Naive thymus-derived CD4-positive, alpha-beta T cell (primary cell): ENCODE measurements at regions of chr3 and their contacts with region 1.

Region 1: DNA sequence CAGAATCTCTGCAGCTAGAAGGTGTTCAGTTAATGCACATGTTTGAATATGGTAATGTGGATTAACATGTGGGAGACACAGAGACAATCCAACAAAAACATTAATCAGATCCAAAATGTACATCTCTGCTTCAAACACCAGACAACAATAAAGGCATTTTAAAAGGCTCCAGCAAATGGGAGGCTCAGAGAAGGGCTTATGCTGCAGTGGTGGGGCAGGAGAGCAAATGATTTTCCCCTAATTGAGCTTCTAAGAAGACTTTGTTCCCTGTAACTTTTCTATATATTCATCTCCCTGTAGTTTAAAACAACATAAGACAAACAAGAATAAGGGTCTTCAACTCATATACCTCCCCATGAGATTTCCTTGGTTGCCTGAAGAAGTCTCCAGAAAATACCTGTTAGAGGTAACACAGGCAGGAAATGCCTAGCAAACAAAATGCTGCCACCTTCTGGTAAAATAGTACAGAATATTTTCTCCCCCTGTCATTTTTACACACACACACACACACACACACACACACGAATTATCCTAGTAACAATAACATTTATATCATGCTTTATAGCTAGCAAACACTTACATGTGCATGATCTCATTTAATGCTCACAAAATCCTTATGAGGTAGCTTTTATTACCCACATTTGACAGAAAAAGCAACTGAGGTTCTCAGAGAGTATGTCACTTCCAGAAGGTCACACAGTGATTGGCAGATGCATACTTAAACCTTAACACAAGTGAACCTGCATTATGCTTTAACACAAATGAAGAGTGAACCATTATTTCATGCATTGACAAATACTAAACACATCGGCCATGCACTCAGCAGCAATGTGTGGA is 123.4 kb upstream of the MB21D2 start:
- DNase-seq: peak in 7 of 9 donors; percentile 13 to 50 (median 30)
- ATAC-seq: peak; percentile 26
- H3K4me3 ChIP-seq: no peak overlapping the region
- H3K4me3 Mint-ChIP-seq: no peak overlapping the region
- H3K27ac ChIP-seq: no peak overlapping the region
- H3K27ac Mint-ChIP-seq: no peak overlapping the region
- H3K4me1 ChIP-seq: no peaks in the 10 kb centered on the region
- H3K4me1 Mint-ChIP-seq: peaks cover 0 to 9% (median 0%) of the 10 kb centered on the region in 7 donors
- H3K27me3 ChIP-seq: no peaks in the 10 kb centered on the region
- H3K27me3 Mint-ChIP-seq: peaks cover 0 to 9% (median 0%) of the 10 kb centered on the region in 5 donors

Region 2: GRCh38 chr3:192887047-192887446 is 154.0 kb before region 1 on chr3:
- CTCF ChIA-PET with region 1: no interaction called
- POLR2A ChIA-PET with region 1: no interaction called
- intact Hi-C with region 1: loop called in 1 of 2 experiments (anchors 5 kb)
- DNase-seq: no peak
- ATAC-seq: no peak
- H3K4me3 ChIP-seq: no peak overlapping the region
- H3K4me3 Mint-ChIP-seq: peak overlapping the region in 1 of 10 donors; percentile 57
- H3K27ac ChIP-seq: no peak overlapping the region
- H3K27ac Mint-ChIP-seq: peak overlapping the region in 1 of 9 donors; percentile 83
- H3K4me1 ChIP-seq: no peaks in the 10 kb centered on the region
- H3K4me1 Mint-ChIP-seq: peaks cover 0 to 68% (median 5%) of the 10 kb centered on the region in 7 donors
- H3K27me3 ChIP-seq: no peaks in the 10 kb centered on the region
- H3K27me3 Mint-ChIP-seq: peaks cover 0 to 3% (median 0%) of the 10 kb centered on the region in 5 donors